ENCODE measurements at regions of chr3 and their contacts with region 1.

Region 1: GRCh38 chr3:13657660-13658435 is 108.9 kb downstream of the FBLN2 start:
- DNase-seq: peak; percentile 46 to 63 (median 60)
- ATAC-seq: peak; percentile 78
- H3K4me3 ChIP-seq: no peak overlapping the region
- H3K27ac ChIP-seq: no peak overlapping the region
- H3K4me1 ChIP-seq: peaks cover 9% of the 10 kb centered on the region
- H3K27me3 ChIP-seq: peaks cover 0 to 10% of the 10 kb centered on the region in 2 donors
- CTCF ChIP-seq: peak; percentile 63 to 87 (median 79)
- POLR2A ChIP-seq: no peak

Region 2: DNA sequence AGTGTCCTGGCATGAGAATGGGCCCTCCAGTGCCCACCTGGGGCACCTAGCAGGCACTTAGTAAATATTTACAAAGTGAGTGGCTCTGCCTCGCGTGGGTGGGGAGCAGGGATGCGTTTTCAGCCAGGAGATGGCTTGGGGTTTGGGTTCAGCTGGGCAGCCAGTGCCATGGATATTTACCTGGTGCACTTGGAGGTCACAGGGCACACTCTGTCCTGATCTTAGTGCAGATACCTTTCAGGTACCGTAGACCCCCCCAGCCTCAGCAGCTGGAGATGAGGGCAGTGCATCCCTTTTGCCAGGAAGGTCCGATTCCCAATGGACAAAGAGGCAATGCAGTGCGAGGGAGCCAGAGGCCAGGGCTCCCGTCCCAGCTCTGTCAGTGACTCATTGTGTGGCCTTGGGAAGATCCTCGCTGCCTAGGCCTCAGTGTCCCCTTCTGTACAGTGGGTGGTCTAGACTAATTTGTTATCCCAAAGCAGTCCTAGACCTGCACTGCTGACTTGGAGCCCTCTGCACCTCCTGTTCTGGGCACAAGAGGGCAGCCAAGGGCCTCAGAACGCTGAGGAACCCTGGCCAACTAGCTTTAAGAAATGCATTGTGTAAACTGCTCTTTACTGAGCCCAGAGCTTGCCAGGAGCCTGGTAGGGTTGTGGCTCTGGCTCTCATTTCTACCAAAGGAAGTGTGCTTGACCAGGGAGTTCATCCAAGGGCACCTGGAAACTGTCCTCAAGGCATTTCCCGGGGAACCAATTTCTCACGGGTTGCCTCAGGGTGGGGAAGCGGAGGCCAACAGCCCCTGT is 161.7 kb before region 1 on chr3:
- intact Hi-C with region 1: loop called (anchors 2 kb)
- DNase-seq: peak; percentile 80 to 90 (median 88)
- ATAC-seq: peak; percentile 94
- H3K4me3 ChIP-seq: no peak overlapping the region
- H3K27ac ChIP-seq: no peak overlapping the region
- H3K4me1 ChIP-seq: peaks cover 8% of the 10 kb centered on the region
- H3K27me3 ChIP-seq: no peaks in the 10 kb centered on the region
- CTCF ChIP-seq: peak; percentile 86 to 95 (median 90)
- POLR2A ChIP-seq: no peak

Region 3: DNA sequence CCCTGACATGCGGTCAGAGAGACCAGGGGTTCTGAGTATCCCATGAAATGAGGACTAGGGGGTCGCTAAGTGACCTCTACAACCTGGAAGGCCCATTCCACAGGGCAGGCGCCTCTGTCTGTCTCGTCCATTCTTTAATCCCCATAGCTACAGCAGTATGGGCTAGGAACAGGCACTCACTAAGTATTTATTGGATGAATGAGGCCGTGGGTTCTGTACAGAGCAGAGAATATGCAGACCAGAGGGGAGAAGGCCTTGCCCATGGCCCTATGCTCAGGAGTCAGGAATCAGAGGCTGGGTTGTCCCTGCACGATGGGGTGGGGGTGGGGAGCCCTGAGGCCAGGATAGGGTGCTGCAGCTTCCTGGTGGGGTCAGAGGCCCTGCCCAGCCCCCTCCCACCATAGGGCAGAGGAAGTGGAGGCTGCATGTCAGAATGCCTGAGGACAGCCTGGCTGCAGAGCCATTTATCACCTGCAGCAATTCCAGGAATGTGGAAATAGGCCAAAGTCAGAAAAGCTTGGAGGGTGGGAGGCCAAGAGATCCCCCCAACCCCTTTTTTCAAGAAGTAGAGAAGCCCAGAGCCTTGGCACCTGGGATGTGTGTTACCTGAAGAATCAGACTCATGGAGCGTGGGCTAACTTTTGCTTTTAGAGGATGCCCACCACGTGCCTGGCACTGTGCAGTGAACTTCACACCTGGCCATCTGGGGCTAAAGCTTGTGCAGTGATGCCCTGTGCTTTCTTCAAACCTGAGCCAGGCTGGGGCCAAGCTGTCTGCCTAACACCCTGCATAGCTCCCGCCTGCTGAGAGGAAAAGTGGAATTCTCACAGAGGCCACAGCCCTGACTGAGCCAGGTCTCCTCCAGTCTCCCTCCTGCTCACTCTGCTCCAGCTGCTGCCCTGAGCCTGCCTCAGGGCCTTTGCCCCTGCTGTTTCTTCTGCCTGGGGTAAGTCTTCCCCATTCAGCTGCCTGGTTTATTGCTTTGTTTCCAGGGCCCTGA is 112.6 kb after region 1 on chr3:
- intact Hi-C with region 1: no loop called
- DNase-seq: peak; percentile 14 to 44 (median 25)
- ATAC-seq: peak; percentile 71
- H3K4me3 ChIP-seq: no peak overlapping the region
- H3K27ac ChIP-seq: no peak overlapping the region
- H3K4me1 ChIP-seq: peaks cover 3% of the 10 kb centered on the region
- H3K27me3 ChIP-seq: no peaks in the 10 kb centered on the region
- CTCF ChIP-seq: no peak
- POLR2A ChIP-seq: no peak

Region 4: GRCh38 chr3:13884851-13885703 is 227.2 kb after region 1 on chr3:
- intact Hi-C with region 1: loop called (anchors 5 kb)
- DNase-seq: peak; percentile 74 to 83 (median 76)
- ATAC-seq: peak; percentile 82
- H3K4me3 ChIP-seq: no peak overlapping the region
- H3K27ac ChIP-seq: no peak overlapping the region
- H3K4me1 ChIP-seq: peaks cover 9% of the 10 kb centered on the region
- H3K27me3 ChIP-seq: peaks cover 0 to 10% of the 10 kb centered on the region in 2 donors
- CTCF ChIP-seq: peak; percentile 72 to 84 (median 83)
- POLR2A ChIP-seq: no peak

Measured in body of pancreas (tissue), 4 donors.